Posterior cingulate gyrus (tissue), 11 donors: ENCODE measurements at regions of chr5 and their contacts with region 1.

Region 1: DNA sequence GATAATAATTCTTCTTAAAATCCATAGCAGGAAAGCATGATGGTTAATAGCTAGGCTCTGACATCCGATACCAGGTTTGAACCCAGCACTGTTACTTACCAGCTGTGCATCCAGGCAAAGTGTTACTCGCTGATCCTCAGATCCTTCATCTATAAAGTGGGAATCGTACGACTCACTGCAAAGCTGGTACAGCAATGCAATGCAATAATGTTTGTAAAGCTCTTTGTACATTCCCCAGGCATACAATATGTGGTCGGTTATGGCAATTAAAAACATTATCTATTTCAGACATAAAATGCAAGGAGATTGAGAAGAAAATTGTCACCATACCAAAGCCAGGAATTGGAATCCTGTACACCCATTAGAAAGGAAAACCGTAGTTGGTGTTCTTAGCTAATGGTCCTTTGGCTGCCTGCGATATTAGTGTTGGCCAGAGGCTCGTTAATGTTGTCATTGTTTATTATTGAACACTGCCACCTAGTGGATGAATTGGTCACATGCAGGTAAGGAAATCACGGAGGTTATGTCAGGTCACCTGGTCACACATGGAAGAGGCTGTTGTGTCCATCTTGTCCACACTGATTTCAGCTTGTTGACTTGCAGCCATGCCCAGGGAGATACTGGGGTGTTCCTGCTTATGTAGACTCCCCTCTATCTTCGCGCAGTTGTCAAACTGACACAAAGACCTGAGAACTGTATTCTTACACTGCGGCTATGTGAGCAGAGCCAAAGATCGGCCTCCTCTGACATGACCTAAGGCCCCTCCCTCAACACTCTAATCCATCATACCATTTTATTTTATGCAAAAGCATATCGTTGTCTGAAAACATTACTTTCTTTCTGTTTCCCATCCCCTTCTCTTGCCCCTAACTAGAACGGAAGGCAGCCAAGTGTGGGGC is 87.5 kb upstream of the PPP2R2B start:
- DNase-seq: peak in 3 of 10 donors; percentile 25 to 46 (median 30)

Region 2: GRCh38 chr5:146565764-146566367 is 400.1 kb before region 1 on chr5:
- intact Hi-C with region 1: loop called (anchors 1 kb)
- DNase-seq: peak in 9 of 10 donors; percentile 15 to 91 (median 57)

Region 3: DNA sequence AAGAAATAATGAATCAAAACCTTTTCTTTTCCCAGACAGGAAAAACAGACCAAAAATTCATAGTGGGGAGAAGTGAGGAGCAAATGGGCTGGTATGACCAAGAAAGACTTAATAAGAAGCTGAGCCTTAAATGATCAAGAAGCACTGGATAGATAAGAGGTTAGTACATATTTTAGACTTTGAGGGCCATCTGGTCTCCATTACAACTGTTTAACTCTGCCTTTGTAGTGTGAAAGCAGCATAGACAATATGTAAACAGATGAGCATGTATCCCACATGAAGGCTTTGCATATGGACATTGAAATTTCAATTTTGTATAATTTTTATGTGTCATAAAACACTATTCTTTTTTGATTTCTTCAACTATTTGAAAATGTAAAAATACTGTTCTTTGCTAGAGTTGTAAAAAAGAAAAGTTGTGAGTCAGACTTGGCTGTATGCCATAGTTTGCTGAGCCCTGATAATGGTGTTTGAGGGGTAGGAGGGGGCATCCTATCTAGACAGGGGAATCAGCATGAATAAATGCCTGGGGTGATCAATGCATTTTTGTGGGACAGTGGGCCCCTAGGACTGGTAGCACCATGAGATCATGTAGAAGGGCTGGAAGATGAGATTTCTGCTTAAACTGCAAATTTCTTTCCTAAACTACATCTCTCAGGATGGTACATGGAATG is 358.2 kb before region 1 on chr5:
- intact Hi-C with region 1: no loop called
- DNase-seq: no peak

Region 4: GRCh38 chr5:146662229-146662628 is 303.8 kb before region 1 on chr5:
- intact Hi-C with region 1: loop called (anchors 5 kb)
- DNase-seq: no peak

Region 5: GRCh38 chr5:146890733-146891440 is 75.1 kb before region 1 on chr5:
- intact Hi-C with region 1: no loop called
- DNase-seq: no peak